Caco-2 (cell line): ENCODE measurements at regions of chr2 and their contacts with region 1.

Region 1: DNA sequence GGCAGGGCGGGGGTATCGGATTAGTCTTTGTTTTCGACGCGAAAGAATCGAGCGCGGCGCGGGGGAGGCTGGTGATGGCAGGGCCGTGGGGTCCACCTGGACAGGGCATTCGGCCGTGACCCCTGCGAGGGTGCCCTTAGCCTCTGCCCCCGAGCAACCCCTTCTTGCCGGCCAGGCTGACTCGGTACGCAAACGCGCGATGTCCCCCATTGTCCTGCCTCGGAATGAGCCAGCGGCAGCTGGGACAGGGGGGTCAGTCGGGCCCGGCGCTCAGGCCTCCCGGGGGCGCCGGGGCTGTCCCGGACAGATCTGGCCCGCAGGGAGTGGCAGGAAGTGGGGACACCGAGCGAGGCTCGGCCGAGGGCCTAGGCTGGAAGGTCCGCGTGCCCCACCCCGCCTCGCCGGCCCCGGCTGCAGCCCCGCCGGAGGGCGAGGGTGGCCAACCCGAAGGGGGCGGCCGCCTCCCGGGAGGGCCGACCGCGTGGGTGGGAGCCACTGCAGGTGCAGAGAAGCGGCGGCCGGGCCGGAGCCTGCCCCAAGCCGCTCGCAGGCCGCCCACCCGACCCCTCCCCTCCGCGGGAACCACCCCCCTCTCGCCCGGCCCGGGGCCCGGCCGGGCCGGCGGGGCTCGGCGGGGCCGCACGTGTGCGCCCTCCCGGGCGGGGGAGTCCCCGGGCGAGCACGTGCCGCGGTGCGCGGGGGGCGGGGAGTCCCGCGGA is at the start of gene TET3:
- DNase-seq: peak; percentile 60 to 72
- H3K4me3 ChIP-seq: peak within 1 kb of the TSS; percentile 87
- H3K4me3 Mint-ChIP-seq: peak within 1 kb of the TSS; percentile 95
- H3K27ac Mint-ChIP-seq: peak within 1 kb of the TSS; percentile 99
- H3K4me1 ChIP-seq: peaks cover 55% of the 10 kb centered on the region
- H3K4me1 Mint-ChIP-seq: peaks cover 33% of the 10 kb centered on the region
- H3K27me3 ChIP-seq: no peaks in the 10 kb centered on the region
- H3K27me3 Mint-ChIP-seq: peaks cover 8% of the 10 kb centered on the region
- CTCF ChIP-seq: no peak
- total RNA-seq, gene TET3: 27.5 and 27.8 TPM in 2 replicates

Region 2: GRCh38 chr2:73828818-73829570 is 155.4 kb before region 1 on chr2 and contains the start of gene STAMBP:
- CTCF ChIA-PET with region 1: no interaction called
- POLR2A ChIA-PET with region 1: interaction called, 3 read pairs
- intact Hi-C with region 1: loop called (anchors 1 kb)
- DNase-seq: peak; percentile 96
- H3K4me3 ChIP-seq: peak within 1 kb of the TSS; percentile 75
- H3K4me3 Mint-ChIP-seq: peak within 1 kb of the TSS; percentile 84
- H3K27ac Mint-ChIP-seq: peak within 1 kb of the TSS; percentile 93
- H3K4me1 ChIP-seq: peaks cover 3% of the 10 kb centered on the region; the same call in 1 of the 2 replicates
- H3K4me1 Mint-ChIP-seq: peaks cover 9% of the 10 kb centered on the region
- H3K27me3 ChIP-seq: no peaks in the 10 kb centered on the region
- H3K27me3 Mint-ChIP-seq: no peaks in the 10 kb centered on the region
- CTCF ChIP-seq: no peak
- total RNA-seq, gene STAMBP: 49.8 and 50.1 TPM in 2 replicates

Region 3: GRCh38 chr2:73926493-73927338 is 57.6 kb before region 1 on chr2 and contains the start of gene DGUOK:
- CTCF ChIA-PET with region 1: no interaction called
- POLR2A ChIA-PET with region 1: no interaction called
- intact Hi-C with region 1: loop called (anchors 1 kb)
- DNase-seq: peak; percentile 97 to 98
- H3K4me3 ChIP-seq: peak within 1 kb of the TSS; percentile 84
- H3K4me3 Mint-ChIP-seq: peak within 1 kb of the TSS; percentile 89
- H3K27ac Mint-ChIP-seq: peak within 1 kb of the TSS; percentile 93
- H3K4me1 ChIP-seq: no peaks in the 10 kb centered on the region; the same call in 1 of the 2 replicates
- H3K4me1 Mint-ChIP-seq: peaks cover 21% of the 10 kb centered on the region
- H3K27me3 ChIP-seq: no peaks in the 10 kb centered on the region
- H3K27me3 Mint-ChIP-seq: no peaks in the 10 kb centered on the region
- CTCF ChIP-seq: no peak
- total RNA-seq, gene DGUOK: 69.6 and 70.7 TPM in 2 replicates

Region 4: DNA sequence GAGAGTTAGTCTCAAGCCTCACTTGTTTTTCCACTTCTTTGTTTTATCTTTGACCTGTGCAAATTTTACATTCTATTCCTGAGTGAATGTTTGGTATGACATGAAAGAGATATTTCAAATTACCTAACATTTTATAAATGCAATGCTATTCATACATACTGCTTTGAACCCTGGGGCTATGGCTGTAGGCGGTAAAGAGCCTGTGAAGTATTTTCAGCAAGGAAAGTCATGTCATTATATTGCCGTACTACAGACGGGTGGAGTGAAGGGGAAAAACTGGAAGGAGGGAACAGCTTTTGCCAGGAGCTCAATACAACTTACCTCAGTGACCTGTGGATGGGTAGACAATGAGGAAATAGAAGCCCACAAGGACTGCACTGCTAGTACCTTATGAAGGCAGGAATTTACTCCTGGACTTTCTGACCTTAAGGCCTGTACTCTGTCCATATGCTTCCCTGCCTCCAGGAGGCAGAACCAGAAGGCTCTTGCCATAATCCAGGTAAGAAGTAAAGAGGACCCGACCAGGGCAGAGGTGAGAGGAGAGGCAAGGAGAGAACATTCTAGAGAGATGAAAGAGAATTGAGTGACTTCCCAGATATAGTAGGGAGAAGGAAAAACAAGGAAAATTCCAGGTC is 28.0 kb before region 1 on chr2:
- CTCF ChIA-PET with region 1: no interaction called
- POLR2A ChIA-PET with region 1: no interaction called
- intact Hi-C with region 1: loop called (anchors 2 kb)
- DNase-seq: peak in 1 of 2 experiments; percentile 18
- H3K4me3 ChIP-seq: no peak overlapping the region
- H3K4me3 Mint-ChIP-seq: no peak overlapping the region
- H3K27ac Mint-ChIP-seq: no peak overlapping the region
- H3K4me1 ChIP-seq: peaks cover 7% of the 10 kb centered on the region; the same call in 1 of the 2 replicates
- H3K4me1 Mint-ChIP-seq: peaks cover 5% of the 10 kb centered on the region
- H3K27me3 ChIP-seq: no peaks in the 10 kb centered on the region
- H3K27me3 Mint-ChIP-seq: no peaks in the 10 kb centered on the region
- CTCF ChIP-seq: peak in 1 of 2 experiments; percentile 8